Psoas muscle (tissue), 8 donors: ENCODE measurements at regions of chr14 and their contacts with region 1.

Region 1: DNA sequence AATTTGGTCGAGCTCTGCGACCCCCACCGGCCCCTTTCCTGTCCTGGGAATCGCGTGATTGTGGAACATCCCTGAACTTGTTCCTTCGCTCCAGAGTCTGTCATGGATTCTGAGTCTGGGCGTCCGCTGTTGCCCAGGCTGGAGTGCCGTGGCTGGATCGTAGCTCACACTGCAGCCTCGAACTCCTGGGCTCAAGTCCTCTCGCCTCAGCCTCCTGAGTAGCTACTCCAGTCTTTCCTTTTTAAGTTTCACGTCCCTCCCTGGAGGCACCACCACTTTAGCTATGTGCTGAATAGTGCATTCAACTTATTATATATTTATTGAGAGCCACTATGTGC is 698 bp downstream of the ACOT6 start:
- DNase-seq: no peak
- ATAC-seq: peak in 3 of 4 donors; percentile 19 to 30 (median 30)
- H3K4me3 ChIP-seq: peak overlapping the region; percentile 86
- H3K27ac ChIP-seq: peak overlapping the region; percentile 82
- H3K4me1 ChIP-seq: no peaks in the 10 kb centered on the region
- H3K27me3 ChIP-seq: no peaks in the 10 kb centered on the region
- CTCF ChIP-seq: no peak

Region 2: DNA sequence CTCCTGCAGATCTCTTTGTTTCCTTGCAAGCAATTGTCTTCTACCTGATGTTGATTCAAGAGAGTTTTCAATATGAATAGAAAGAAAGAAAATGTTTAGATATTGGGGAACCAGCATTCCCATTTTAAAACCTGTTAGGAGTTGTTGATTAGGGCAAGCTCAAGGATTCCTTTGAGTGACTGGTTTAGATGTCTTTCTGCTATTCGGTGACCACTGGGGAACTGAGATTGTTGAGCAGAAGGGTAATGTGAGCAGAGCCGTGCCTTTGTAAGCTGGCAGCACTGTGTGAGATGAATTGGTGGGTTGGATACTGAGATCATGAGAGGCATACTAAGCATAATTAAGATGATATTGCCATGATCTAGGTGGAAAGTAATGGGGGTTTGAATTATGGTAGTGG is 414.8 kb before region 1 on chr14:
- intact Hi-C with region 1: no loop called
- DNase-seq: no peak
- ATAC-seq: no peak
- H3K4me3 ChIP-seq: no peak overlapping the region
- H3K27ac ChIP-seq: no peak overlapping the region
- H3K4me1 ChIP-seq: no peaks in the 10 kb centered on the region
- H3K27me3 ChIP-seq: no peaks in the 10 kb centered on the region
- CTCF ChIP-seq: no peak

Region 3: GRCh38 chr14:73231981-73232851 is 380.8 kb before region 1 on chr14:
- intact Hi-C with region 1: no loop called
- DNase-seq: peak in 1 of 2 donors; percentile 46
- ATAC-seq: no peak
- H3K4me3 ChIP-seq: no peak overlapping the region
- H3K27ac ChIP-seq: no peak overlapping the region
- H3K4me1 ChIP-seq: peaks cover 3% of the 10 kb centered on the region
- H3K27me3 ChIP-seq: peaks cover 0 to 27% (median 10%) of the 10 kb centered on the region in 3 donors
- CTCF ChIP-seq: no peak

Region 4: GRCh38 chr14:73491256-73492042 is 121.6 kb before region 1 on chr14:
- intact Hi-C with region 1: loop called in 1 of 2 experiments (anchors 5 kb)
- DNase-seq: peak; percentile 64 to 76
- ATAC-seq: peak; percentile 65 to 71 (median 68)
- H3K4me3 ChIP-seq: peak overlapping the region; percentile 80
- H3K27ac ChIP-seq: peak overlapping the region; percentile 79
- H3K4me1 ChIP-seq: peaks cover 18% of the 10 kb centered on the region
- H3K27me3 ChIP-seq: no peaks in the 10 kb centered on the region
- CTCF ChIP-seq: no peak

Region 5: GRCh38 chr14:73568381-73568781 is 44.6 kb before region 1 on chr14:
- intact Hi-C with region 1: loop called in 1 of 2 experiments (anchors 5 kb)
- DNase-seq: no peak
- ATAC-seq: peak in 1 of 4 donors; percentile 32
- H3K4me3 ChIP-seq: peak overlapping the region; percentile 77
- H3K27ac ChIP-seq: peak overlapping the region; percentile 92
- H3K4me1 ChIP-seq: peaks cover 23% of the 10 kb centered on the region
- H3K27me3 ChIP-seq: no peaks in the 10 kb centered on the region
- CTCF ChIP-seq: no peak

Region 6: DNA sequence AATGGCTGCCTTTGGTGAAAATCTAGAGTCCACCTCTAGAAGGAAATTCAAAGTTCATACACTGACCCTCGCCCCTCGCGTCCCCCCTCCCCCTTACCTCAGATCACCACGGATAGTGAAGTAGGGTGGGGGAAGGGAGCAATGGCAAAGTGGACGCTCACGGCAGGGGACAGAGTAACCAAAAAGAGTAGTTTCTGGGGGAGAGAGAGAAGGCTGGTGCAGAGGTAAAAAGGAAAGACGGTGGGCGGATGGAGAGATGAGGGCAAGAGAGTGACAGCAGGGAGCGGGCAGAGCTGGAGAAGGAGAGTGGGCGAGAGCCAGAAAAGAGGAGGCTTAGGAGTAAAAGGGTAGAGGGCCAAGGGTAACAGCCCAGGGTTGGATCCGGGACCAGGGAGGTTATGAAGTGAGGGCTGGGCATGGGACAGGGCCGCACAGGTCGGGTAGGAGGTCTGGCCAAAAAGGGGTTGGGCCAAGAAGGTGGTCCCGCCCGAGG is 470.8 kb after region 1 on chr14:
- intact Hi-C with region 1: no loop called
- DNase-seq: no peak
- ATAC-seq: peak; percentile 15 to 43 (median 15)
- H3K4me3 ChIP-seq: peak overlapping the region; percentile 87
- H3K27ac ChIP-seq: peak overlapping the region; percentile 83
- H3K4me1 ChIP-seq: peaks cover 24% of the 10 kb centered on the region
- H3K27me3 ChIP-seq: no peaks in the 10 kb centered on the region
- CTCF ChIP-seq: no peak